Aorta (tissue), 5 donors: ENCODE measurements at regions of chr2 and their contacts with region 1.

Region 1: DNA sequence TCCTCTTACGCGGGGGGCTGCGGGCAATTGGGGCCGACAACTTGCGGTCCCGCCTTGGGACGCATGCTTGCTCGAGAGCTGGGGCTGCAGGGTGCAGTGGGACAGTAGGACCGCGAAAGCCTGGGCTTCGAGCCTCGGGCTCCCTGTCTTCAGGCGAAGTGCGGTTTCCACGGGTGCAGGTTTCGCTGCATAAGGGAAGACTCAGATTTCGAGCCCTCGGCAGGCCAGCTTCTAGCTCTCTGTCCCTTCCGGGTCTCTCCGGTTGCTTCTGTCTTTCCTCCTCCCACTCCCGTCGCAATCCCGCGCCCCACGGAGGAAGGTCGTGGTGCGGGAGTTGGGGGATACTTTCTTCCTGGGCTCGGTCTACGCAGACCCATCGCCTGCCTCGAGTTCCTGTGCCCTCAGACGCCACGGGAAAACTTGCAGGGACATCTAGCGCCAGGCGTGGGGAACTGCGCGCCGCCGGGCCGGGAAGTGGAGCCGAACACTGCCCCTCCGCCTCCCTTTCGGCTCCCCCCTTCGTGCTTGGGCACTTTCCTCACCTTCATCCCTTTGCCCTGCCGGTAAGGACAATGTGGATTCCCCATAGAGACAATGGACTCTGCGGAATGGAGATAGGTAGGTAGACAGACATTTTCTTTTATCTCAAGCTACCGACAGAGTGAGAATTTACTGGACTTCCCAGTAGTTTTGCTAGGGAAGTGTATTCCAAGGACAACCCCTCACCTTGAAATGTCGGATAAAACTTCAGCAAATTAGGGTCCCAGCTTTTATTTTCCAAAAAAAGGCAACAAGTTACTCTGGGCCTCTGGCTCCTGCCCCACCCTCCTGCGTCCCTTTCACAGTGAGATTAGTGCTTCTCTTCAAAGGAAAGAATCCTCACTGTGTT is 4.2 kb upstream of the HOXD13 start:
- DNase-seq: peak in 1 of 2 donors; percentile 89
- ATAC-seq: peak; percentile 86
- H3K4me3 ChIP-seq: peak overlapping the region in 1 of 2 donors; percentile 12
- H3K27ac ChIP-seq: no peak overlapping the region
- H3K4me1 ChIP-seq: no peaks in the 10 kb centered on the region
- H3K27me3 ChIP-seq: no peaks in the 10 kb centered on the region

Region 2: GRCh38 chr2:174341286-174341994 is 1746.9 kb before region 1 on chr2:
- intact Hi-C with region 1: loop called in 1 of 2 experiments (anchors 10 kb)
- DNase-seq: peak; percentile 89 to 95
- ATAC-seq: peak; percentile 95
- H3K4me3 ChIP-seq: no peak overlapping the region
- H3K27ac ChIP-seq: no peak overlapping the region
- H3K4me1 ChIP-seq: no peaks in the 10 kb centered on the region
- H3K27me3 ChIP-seq: peaks cover 0 to 1% of the 10 kb centered on the region in 2 donors

Region 3: DNA sequence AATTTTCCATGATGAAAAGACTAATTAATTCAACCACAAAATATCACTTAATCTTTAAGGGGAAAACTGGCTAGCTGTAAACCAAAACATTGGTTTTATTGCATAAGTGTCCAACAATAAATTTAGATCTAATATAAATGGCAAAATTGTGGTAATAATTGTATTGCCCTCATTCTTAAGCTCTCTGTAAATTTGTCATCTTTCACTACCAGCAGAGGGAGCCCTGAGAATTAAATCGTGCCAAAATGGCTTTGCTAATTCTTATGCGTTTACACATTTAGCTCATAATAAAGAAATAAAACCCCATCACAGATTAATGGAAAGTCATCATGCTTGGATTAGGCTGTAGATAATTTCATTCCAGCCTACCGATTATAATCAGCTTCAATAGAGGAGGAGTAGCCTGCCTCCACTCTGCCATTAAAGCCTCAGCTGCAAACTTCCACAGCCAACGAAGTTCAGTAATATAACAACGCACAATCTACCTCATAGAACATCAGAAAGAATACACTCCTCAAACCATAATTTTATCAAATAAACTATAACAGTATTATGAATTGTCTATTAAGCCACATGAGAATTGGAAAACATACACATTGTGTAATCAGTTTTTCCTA is 836.8 kb before region 1 on chr2:
- intact Hi-C with region 1: loop called in 1 of 2 experiments (anchors 5 kb)
- DNase-seq: no peak
- ATAC-seq: no peak
- H3K4me3 ChIP-seq: no peak overlapping the region
- H3K27ac ChIP-seq: no peak overlapping the region
- H3K4me1 ChIP-seq: no peaks in the 10 kb centered on the region
- H3K27me3 ChIP-seq: no peaks in the 10 kb centered on the region

Region 4: GRCh38 chr2:175366815-175367214 is 721.5 kb before region 1 on chr2:
- intact Hi-C with region 1: loop called in 1 of 2 experiments (anchors 5 kb)
- DNase-seq: no peak
- ATAC-seq: peak; percentile 74
- H3K4me3 ChIP-seq: no peak overlapping the region
- H3K27ac ChIP-seq: no peak overlapping the region
- H3K4me1 ChIP-seq: no peaks in the 10 kb centered on the region
- H3K27me3 ChIP-seq: no peaks in the 10 kb centered on the region

Region 5: GRCh38 chr2:175690113-175690837 is 398.0 kb before region 1 on chr2:
- intact Hi-C with region 1: loop called (anchors 1 to 2 kb)
- DNase-seq: no peak
- ATAC-seq: peak; percentile 78
- H3K4me3 ChIP-seq: no peak overlapping the region
- H3K27ac ChIP-seq: no peak overlapping the region
- H3K4me1 ChIP-seq: no peaks in the 10 kb centered on the region
- H3K27me3 ChIP-seq: peaks cover 0 to 1% of the 10 kb centered on the region in 2 donors

Region 6: GRCh38 chr2:175892046-175892445 is 196.2 kb before region 1 on chr2:
- intact Hi-C with region 1: no loop called
- DNase-seq: no peak
- ATAC-seq: no peak
- H3K4me3 ChIP-seq: no peak overlapping the region
- H3K27ac ChIP-seq: no peak overlapping the region
- H3K4me1 ChIP-seq: no peaks in the 10 kb centered on the region
- H3K27me3 ChIP-seq: no peaks in the 10 kb centered on the region